ENCODE measurements at regions of chr6 and their contacts with region 1.

Region 1: DNA sequence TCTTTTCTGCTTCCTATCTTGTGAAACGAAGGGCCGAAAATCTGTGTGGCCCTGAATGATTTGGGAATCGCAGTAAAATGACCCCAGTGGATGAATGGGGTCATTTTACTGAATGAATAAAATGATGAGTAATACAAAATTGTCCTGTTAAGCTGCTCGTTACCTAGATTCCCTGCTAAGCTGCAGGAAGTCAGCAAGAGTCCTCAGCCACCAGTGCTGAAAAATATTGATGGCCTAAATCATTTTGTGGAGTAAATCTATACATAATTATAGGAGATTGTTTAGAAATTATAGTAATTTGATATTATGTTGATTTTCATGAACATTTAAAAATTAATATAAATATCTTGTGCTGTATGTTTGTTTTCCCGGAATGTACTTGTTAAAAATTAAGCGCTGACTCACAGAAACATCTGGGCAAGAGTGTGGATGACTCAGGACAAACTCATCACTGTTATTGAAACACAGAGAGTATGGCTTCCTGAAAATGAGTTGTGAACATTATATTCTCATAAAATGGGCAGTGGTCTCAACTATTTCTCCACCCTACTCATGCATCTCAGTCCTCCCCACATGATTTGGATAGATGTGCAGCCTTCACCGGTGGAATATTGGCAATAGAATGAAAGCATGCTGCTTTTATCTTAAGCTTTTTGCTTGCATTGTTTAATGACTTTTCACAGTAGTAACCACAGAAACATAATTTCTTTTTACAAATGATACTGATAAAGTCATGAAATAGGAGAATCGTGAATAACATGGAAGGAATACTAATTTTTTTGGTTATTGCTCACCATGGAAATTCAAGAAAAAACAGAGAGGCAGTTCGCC is 36.2 kb upstream of the RGS17 start:
- DNase-seq: peak; percentile 83
- ATAC-seq: peak; percentile 82
- H3K4me3 ChIP-seq: peak overlapping the region; percentile 41; the same call in 1 of the 2 replicates
- H3K27ac ChIP-seq: peak overlapping the region; percentile 93
- H3K4me1 ChIP-seq: peaks cover 33% of the 10 kb centered on the region
- H3K27me3 ChIP-seq: no peaks in the 10 kb centered on the region
- CTCF ChIP-seq: no peak

Region 2: DNA sequence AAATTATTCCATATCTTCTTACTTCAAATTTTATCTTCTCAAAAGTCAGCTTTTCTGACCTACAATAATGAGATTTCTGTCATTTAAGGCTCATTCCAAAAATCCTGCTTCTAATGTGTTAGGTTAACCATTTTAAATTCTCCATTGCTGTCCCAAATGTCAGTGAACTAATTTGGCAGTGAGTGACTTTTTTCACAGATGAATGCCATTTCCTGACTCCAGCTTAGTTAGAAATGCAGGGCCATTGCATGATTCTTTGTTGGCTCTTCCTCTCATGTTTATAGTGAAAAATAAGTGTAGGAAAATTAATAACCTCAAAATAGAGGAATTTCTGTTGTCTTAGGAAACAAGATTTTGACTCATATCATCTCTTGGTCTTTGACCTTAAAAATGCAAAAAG is 372.6 kb before region 1 on chr6:
- CTCF ChIA-PET with region 1: no interaction called
- POLR2A ChIA-PET with region 1: no interaction called
- intact Hi-C with region 1: no loop called
- DNase-seq: no peak
- ATAC-seq: no peak
- H3K4me3 ChIP-seq: no peak overlapping the region
- H3K27ac ChIP-seq: no peak overlapping the region
- H3K4me1 ChIP-seq: no peaks in the 10 kb centered on the region
- H3K27me3 ChIP-seq: peaks cover 11% of the 10 kb centered on the region; the same call in 1 of the 2 replicates
- CTCF ChIP-seq: no peak

Region 3: GRCh38 chr6:152982768-152983636 is 184.3 kb before region 1 on chr6 and contains the start of gene FBXO5:
- CTCF ChIA-PET with region 1: no interaction called
- POLR2A ChIA-PET with region 1: no interaction called
- intact Hi-C with region 1: loop called (anchors 2 kb)
- DNase-seq: peak; percentile 95
- ATAC-seq: peak; percentile 84
- H3K4me3 ChIP-seq: peak within 1 kb of the TSS; percentile 83
- H3K27ac ChIP-seq: peak within 1 kb of the TSS; percentile 97
- H3K4me1 ChIP-seq: peaks cover 25% of the 10 kb centered on the region
- H3K27me3 ChIP-seq: no peaks in the 10 kb centered on the region
- CTCF ChIP-seq: no peak
- total RNA-seq, gene FBXO5: 11.5 and 16.8 TPM in 2 replicates

Region 4: GRCh38 chr6:153131037-153131981 is 36.0 kb before region 1 on chr6 and contains the start of gene RGS17:
- CTCF ChIA-PET with region 1: no interaction called
- POLR2A ChIA-PET with region 1: no interaction called
- intact Hi-C with region 1: loop called (anchors 2 kb)
- DNase-seq: peak; percentile 49
- ATAC-seq: peak; percentile 72
- H3K4me3 ChIP-seq: peak within 1 kb of the TSS; percentile 84
- H3K27ac ChIP-seq: no peak within 1 kb of the TSS
- H3K4me1 ChIP-seq: peaks cover 10% of the 10 kb centered on the region
- H3K27me3 ChIP-seq: no peaks in the 10 kb centered on the region
- CTCF ChIP-seq: no peak
- total RNA-seq, gene RGS17: 0.40 and 1.4 TPM in 2 replicates

Region 5: DNA sequence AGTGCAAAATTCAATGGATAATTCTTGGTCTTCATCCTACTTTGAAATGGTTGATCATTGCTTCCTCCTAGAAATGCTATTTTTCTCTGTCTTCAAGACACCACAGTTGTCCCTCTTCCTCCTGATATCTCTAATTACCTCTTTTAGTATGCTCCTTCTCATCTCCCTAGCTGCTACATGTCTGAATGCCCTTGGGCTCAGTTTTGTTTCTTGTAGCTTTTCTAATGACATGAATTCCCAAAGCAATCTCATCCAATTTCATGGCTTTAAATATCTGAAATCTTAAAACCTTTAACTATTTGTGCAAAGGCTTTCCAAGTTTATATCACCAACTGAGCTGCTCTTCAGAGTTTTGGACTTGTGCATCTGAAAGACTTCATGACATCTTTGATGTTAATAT is 84.0 kb after region 1 on chr6:
- CTCF ChIA-PET with region 1: no interaction called
- POLR2A ChIA-PET with region 1: no interaction called
- intact Hi-C with region 1: no loop called
- DNase-seq: no peak
- ATAC-seq: no peak
- H3K4me3 ChIP-seq: no peak overlapping the region
- H3K27ac ChIP-seq: no peak overlapping the region
- H3K4me1 ChIP-seq: no peaks in the 10 kb centered on the region
- H3K27me3 ChIP-seq: peaks cover 49% of the 10 kb centered on the region
- CTCF ChIP-seq: no peak

Measured in PC-3 (cell line).